H1 (cell line): ENCODE measurements at regions of chr5 and their contacts with region 1.

Region 1: DNA sequence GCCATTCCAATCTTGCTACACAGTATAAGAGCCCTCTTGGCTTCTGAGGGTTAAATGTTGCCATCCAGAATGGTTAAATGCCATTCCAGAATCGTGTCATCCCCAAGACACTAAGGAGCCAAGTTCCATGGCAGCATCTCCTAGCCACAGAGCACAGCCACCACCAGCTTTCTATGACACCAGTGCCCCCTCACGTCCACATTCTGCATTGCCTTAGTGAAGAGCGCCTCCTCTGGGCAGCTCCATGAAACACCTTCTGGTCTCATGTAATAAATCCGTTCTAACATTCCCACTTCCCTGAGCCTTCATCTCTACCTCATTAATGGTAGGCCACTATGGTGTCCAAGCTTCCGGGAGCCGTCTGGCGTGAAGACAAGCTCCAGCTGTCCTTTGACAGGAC is 12.4 kb downstream of the CBY3 start:
- DNase-seq: peak; percentile 54 to 85
- H3K4me3 ChIP-seq: no peak overlapping the region
- H3K27ac ChIP-seq: no peak overlapping the region
- H3K4me1 ChIP-seq: no peaks in the 10 kb centered on the region
- H3K27me3 ChIP-seq: no peaks in the 10 kb centered on the region
- CTCF ChIP-seq: peak; percentile 99 to 100 (median 100)
- EP300 ChIP-seq: no peak
- POLR2A ChIP-seq: no peak
- RAD21 ChIP-seq: peak; percentile 97 to 98

Region 2: DNA sequence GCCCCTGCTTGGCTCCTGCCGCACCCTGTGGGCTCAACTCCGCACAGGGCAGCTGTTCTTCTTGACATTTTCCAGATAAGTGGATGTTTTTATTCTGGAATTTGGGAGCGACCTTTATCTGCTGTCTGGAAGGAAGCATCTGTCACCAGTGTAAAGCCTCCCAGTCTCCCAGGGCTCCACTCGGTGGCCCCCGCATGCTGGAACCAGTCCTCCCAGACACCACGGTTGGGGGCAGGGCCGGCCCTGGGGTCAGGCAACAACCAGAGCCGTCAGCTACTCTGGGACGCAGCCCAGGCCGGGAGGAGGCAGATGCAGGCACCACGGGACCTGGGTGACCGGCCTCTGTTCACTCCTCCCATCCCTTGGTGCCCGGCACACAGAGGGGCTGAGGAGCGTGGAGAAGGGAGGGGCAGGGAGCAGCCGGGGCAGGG is 230.4 kb before region 1 on chr5:
- CTCF ChIA-PET with region 1: no interaction called
- POLR2A ChIA-PET with region 1: no interaction called
- DNase-seq: no peak
- H3K4me3 ChIP-seq: no peak overlapping the region
- H3K27ac ChIP-seq: no peak overlapping the region
- H3K4me1 ChIP-seq: no peaks in the 10 kb centered on the region
- H3K27me3 ChIP-seq: no peaks in the 10 kb centered on the region; a peak in 1 of 7 replicates
- CTCF ChIP-seq: no peak
- EP300 ChIP-seq: no peak
- POLR2A ChIP-seq: no peak
- RAD21 ChIP-seq: no peak

Region 3: GRCh38 chr5:179599975-179600391 is 68.4 kb before region 1 on chr5:
- CTCF ChIA-PET with region 1: interaction called, 38 read pairs
- POLR2A ChIA-PET with region 1: interaction called, 4 read pairs
- DNase-seq: no peak
- H3K4me3 ChIP-seq: no peak overlapping the region
- H3K27ac ChIP-seq: no peak overlapping the region
- H3K4me1 ChIP-seq: no peaks in the 10 kb centered on the region
- H3K27me3 ChIP-seq: no peaks in the 10 kb centered on the region
- CTCF ChIP-seq: no peak
- EP300 ChIP-seq: no peak
- POLR2A ChIP-seq: no peak
- RAD21 ChIP-seq: no peak

Region 4: DNA sequence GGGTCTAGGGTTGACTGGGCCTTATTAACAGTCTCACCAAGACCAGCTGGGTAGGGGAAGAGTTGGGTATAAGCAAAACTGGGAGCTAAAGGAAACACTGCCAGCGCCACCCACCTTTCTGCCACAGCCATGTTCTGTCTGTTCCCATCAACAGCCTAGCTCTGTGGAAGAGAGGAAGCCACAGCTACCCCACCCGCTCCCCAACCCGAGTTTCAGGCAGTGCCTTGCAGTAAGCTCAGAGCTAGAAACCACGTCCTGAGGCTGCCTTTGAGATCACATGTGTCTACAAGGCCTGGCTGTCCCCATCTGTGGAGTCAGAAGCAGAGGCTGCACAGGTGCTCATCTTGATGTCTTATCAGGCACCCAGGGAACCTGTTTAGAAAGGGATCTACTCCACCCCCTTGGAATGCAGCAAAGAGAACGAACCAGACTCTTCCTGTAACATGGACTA is 60.2 kb before region 1 on chr5:
- CTCF ChIA-PET with region 1: interaction called, 56 read pairs
- POLR2A ChIA-PET with region 1: interaction called, 351 read pairs
- DNase-seq: no peak
- H3K4me3 ChIP-seq: no peak overlapping the region
- H3K27ac ChIP-seq: no peak overlapping the region
- H3K4me1 ChIP-seq: no peaks in the 10 kb centered on the region
- H3K27me3 ChIP-seq: no peaks in the 10 kb centered on the region
- CTCF ChIP-seq: no peak
- EP300 ChIP-seq: no peak
- POLR2A ChIP-seq: peak in 1 of 2 experiments; percentile 12; a peak in 2 of 3 replicates
- RAD21 ChIP-seq: no peak

Region 5: GRCh38 chr5:179613460-179614071 is 54.8 kb before region 1 on chr5:
- CTCF ChIA-PET with region 1: interaction called, 67 read pairs
- POLR2A ChIA-PET with region 1: interaction called, 351 read pairs
- DNase-seq: no peak
- H3K4me3 ChIP-seq: no peak overlapping the region
- H3K27ac ChIP-seq: no peak overlapping the region
- H3K4me1 ChIP-seq: no peaks in the 10 kb centered on the region
- H3K27me3 ChIP-seq: no peaks in the 10 kb centered on the region
- CTCF ChIP-seq: no peak
- EP300 ChIP-seq: no peak
- POLR2A ChIP-seq: peak; percentile 68 to 71
- RAD21 ChIP-seq: no peak

Region 6: DNA sequence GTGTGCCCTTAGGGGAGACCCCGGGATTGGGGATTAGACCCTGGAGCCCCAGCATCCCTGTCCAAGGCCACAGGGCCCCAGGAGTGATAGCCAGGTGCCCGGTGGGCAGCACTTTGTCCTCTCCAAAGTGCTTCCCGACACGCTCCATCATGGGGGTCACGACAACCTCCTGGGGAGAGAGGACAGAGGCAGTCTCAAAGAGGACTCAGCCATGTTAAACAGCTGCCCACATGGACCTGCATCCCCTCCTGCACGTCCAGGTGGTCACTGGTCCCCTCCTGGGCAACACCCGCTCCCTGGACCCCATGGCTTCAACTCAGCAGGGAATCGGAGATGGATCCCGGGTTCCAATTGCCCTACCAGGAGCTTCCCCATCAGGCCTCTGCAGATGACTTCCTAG is 24.8 kb before region 1 on chr5:
- CTCF ChIA-PET with region 1: interaction called, 25 read pairs
- POLR2A ChIA-PET with region 1: no interaction called
- DNase-seq: no peak
- H3K4me3 ChIP-seq: no peak overlapping the region
- H3K27ac ChIP-seq: no peak overlapping the region
- H3K4me1 ChIP-seq: peaks cover 0 to 2% (median 0%) of the 10 kb centered on the region in 4 experiments; a peak in 1 of 7 replicates
- H3K27me3 ChIP-seq: no peaks in the 10 kb centered on the region
- CTCF ChIP-seq: no peak
- EP300 ChIP-seq: no peak
- POLR2A ChIP-seq: no peak
- RAD21 ChIP-seq: no peak

Region 7: GRCh38 chr5:179678223-179679013 is 10.0 kb after region 1 on chr5:
- CTCF ChIA-PET with region 1: interaction called, 16 read pairs
- POLR2A ChIA-PET with region 1: interaction called, 11 read pairs
- DNase-seq: peak; percentile 88 to 94
- H3K4me3 ChIP-seq: peak overlapping the region; percentile 78 to 89 (median 82)
- H3K27ac ChIP-seq: peak overlapping the region; percentile 76
- H3K4me1 ChIP-seq: peaks cover 0 to 12% (median 7%) of the 10 kb centered on the region in 4 experiments; a peak in 5 of 7 replicates
- H3K27me3 ChIP-seq: peaks cover 0 to 4% (median 0%) of the 10 kb centered on the region in 4 experiments; a peak in 1 of 7 replicates
- CTCF ChIP-seq: peak in 1 of 3 experiments; percentile 0; a peak in 1 of 4 replicates
- EP300 ChIP-seq: no peak
- POLR2A ChIP-seq: peak; percentile 80 to 81
- RAD21 ChIP-seq: no peak

Region 8: GRCh38 chr5:179697993-179698934 is 29.9 kb after region 1 on chr5:
- CTCF ChIA-PET with region 1: interaction called, 29 read pairs
- POLR2A ChIA-PET with region 1: interaction called, 4 read pairs
- DNase-seq: peak; percentile 96 to 98
- H3K4me3 ChIP-seq: peak overlapping the region; percentile 91 to 99 (median 96)
- H3K27ac ChIP-seq: peak overlapping the region; percentile 91
- H3K4me1 ChIP-seq: peaks cover 0 to 9% (median 2%) of the 10 kb centered on the region in 4 experiments; a peak in 3 of 7 replicates
- H3K27me3 ChIP-seq: no peaks in the 10 kb centered on the region
- CTCF ChIP-seq: no peak
- EP300 ChIP-seq: no peak
- POLR2A ChIP-seq: peak; percentile 74 to 82
- RAD21 ChIP-seq: no peak

Region 9: GRCh38 chr5:179821581-179822432 is 153.4 kb after region 1 on chr5:
- CTCF ChIA-PET with region 1: no interaction called
- POLR2A ChIA-PET with region 1: no interaction called
- DNase-seq: peak in 1 of 2 experiments; percentile 80
- H3K4me3 ChIP-seq: peak overlapping the region; percentile 75 to 91 (median 83)
- H3K27ac ChIP-seq: peak overlapping the region; percentile 91; the same call in 1 of the 2 replicates
- H3K4me1 ChIP-seq: peaks cover 4 to 38% (median 33%) of the 10 kb centered on the region in 4 experiments
- H3K27me3 ChIP-seq: no peaks in the 10 kb centered on the region; a peak in 2 of 7 replicates
- CTCF ChIP-seq: 0 out of 4 replicates have a peak, but pooled peaks of 1 of the 3 experiments have one; percentile 11
- EP300 ChIP-seq: no peak
- POLR2A ChIP-seq: 0 out of 3 replicates have a peak, but pooled peaks of 1 of the 2 experiments have one; percentile 35
- RAD21 ChIP-seq: no peak